ENCODE measurements at regions of chr19 and their contacts with region 1.

Region 1: GRCh38 chr19:42108527-42109389 is 23.5 kb downstream of the POU2F2 start:
- H3K4me3 ChIP-seq: no peak overlapping the region
- H3K27ac ChIP-seq: no peak overlapping the region
- H3K4me1 ChIP-seq: peaks cover under 1% of the 10 kb centered on the region; the same call in 1 of the 2 replicates
- CTCF ChIP-seq: peak; percentile 100

Region 2: DNA sequence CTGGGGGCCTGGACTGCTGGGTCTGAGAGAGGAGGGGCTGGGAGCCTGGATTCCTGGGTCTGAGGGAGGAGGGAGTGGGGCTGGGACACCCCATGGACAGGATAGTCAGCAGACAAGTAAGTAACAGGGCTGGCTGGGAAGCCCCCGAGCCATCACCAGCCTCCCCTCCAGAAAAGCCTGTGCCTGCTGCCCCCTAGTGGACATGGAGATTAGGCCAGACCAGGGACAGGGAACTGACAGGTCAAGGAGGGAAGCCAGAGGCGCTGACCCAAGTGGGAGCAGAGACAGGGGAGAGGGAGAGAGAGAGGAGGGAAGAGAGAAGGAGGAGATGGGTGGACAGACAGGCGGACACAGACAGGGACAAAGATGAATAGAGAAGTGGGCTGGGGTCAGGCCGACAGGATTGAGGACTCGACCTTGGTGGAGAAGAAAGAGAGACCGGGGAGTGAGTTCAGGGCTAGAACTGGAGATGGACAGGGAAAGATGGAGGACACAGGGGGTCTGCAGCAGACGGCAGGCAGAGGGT is 173.8 kb before region 1 on chr19:
- CTCF ChIA-PET with region 1: no interaction called
- POLR2A ChIA-PET with region 1: no interaction called
- H3K4me3 ChIP-seq: no peak overlapping the region
- H3K27ac ChIP-seq: no peak overlapping the region
- H3K4me1 ChIP-seq: peaks cover 7% of the 10 kb centered on the region
- CTCF ChIP-seq: peak; percentile 96

Region 3: DNA sequence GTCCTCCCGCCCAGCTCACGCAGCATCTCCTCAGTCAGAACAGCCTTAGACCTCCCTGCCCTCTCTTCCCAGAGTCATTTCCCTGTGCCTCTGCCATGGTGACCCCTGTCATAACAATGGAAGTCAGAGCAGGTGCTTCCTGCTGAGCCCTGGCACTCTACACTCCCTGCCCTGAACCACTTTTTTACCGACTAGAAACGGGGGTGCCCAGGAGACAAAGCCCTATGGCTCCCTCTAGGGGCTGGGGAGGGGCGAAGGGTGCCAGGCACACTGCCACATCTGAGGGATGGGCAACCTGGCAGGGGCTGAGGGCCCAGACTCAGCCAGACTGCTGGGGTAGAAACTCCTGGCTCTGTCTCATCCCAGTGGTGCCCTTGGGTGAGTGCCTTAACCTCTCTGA is 16.4 kb before region 1 on chr19:
- CTCF ChIA-PET with region 1: interaction called, 39 read pairs
- POLR2A ChIA-PET with region 1: interaction called, 3 read pairs
- H3K4me3 ChIP-seq: no peak overlapping the region
- H3K27ac ChIP-seq: no peak overlapping the region
- H3K4me1 ChIP-seq: no peaks in the 10 kb centered on the region
- CTCF ChIP-seq: peak; percentile 82

Region 4: DNA sequence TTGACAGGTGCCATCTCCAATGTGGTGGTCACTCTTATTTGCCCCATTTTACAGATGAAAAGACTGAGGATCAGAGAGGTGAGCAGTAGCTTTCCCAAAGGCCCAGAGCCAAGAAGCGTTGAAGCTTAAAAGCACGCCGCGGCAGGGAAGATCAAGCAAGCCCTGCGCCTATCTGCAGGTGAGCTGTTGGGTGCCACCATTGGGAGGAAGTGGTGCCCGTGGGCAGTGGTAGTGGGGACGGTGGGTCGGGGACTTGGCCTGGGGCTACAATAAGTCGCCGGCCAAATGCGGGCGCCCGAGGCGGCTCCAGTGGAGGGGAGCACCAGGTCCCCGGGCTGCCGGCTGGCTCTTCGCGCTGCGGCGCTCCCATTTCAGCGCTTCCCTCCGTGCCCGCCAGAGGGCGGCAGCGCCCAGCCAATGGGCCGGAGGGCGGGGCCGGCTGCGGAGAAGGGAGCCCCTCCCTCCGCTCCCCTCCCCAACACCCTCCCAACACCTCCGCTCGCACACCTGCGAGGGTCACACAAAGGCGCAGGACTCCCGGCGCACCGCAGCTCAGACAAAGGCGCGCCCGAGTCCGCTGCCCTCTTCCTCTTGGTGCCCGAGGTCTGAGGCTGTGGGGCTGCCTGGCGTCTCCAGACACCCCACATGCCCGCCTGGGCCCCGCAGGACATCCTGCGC is 24.2 kb after region 1 on chr19:
- CTCF ChIA-PET with region 1: interaction called, 122 read pairs
- POLR2A ChIA-PET with region 1: no interaction called
- H3K4me3 ChIP-seq: no peak overlapping the region
- H3K27ac ChIP-seq: no peak overlapping the region
- H3K4me1 ChIP-seq: no peaks in the 10 kb centered on the region
- CTCF ChIP-seq: peak; percentile 98

Region 5: DNA sequence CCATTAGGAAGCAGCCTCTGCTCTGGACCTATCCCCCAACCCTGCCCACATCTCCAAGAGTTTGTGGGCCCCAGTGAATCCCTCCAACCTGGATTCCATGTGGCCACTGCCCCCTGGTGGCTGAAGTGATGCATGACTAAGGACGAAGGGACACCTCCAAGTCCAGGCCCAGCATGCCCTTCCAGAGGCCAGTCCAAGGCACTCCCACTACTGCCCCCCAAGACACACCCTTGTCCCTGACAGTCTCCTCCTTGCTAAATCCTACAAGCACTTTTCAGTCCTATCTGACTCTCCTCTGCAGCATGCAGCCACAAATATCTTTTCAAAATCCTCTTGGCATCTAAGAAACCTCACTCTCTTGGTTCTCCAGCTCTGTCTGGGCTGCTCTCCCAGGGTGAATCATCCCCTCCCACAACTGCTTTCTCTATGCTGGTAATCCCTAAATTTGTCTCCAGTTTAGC is 75.7 kb after region 1 on chr19:
- CTCF ChIA-PET with region 1: interaction called, 101 read pairs
- POLR2A ChIA-PET with region 1: no interaction called
- H3K4me3 ChIP-seq: no peak overlapping the region
- H3K27ac ChIP-seq: no peak overlapping the region
- H3K4me1 ChIP-seq: no peaks in the 10 kb centered on the region
- CTCF ChIP-seq: peak; percentile 92

Region 6: GRCh38 chr19:42283143-42284065 is 174.6 kb after region 1 on chr19:
- CTCF ChIA-PET with region 1: interaction called, 13 read pairs
- POLR2A ChIA-PET with region 1: no interaction called
- H3K4me3 ChIP-seq: peak overlapping the region; percentile 39
- H3K27ac ChIP-seq: peak overlapping the region; percentile 90
- H3K4me1 ChIP-seq: peaks cover 51% of the 10 kb centered on the region
- CTCF ChIP-seq: peak; percentile 84

Region 7: DNA sequence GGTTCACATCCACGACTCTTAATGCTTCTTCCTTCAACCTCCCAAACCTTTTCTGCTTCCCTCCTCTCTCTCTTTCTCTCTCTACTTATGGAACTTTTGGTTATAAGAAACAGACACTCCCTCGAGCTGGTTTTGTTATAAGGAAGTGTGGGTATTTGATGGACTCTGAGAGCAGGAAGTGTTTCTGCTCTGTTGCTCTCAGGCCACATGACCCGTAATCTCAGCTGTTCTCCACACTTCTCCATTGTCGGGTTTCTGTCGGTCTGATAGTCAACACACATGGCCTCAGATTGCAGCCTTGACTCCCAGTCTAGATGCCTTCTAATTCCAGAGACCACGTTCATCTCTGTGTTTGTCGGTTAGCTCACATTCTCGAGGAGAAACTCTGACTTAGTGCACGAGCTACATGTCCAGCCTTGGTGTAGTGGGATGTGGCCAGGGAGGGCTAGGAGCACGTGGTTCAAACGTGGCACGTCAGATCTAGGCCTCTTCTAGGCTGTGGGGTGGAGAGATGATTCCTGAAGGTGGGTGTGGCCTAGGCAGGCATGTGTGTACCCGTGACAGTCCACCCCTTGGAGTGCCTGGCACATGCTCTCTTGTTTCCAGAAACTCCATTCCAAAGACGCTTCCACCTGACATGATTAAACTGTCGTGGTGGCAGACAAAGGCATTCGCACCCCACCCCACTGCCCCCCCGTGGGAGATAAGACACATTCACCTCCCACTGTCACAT is 255.0 kb after region 1 on chr19:
- CTCF ChIA-PET with region 1: no interaction called
- POLR2A ChIA-PET with region 1: no interaction called
- H3K4me3 ChIP-seq: no peak overlapping the region
- H3K27ac ChIP-seq: no peak overlapping the region
- H3K4me1 ChIP-seq: 0 out of 2 replicates have a peak, but pooled peaks cover 3% of the 10 kb centered on the region
- CTCF ChIP-seq: no peak

Measured in HEK293 (cell line).